Cardiac septum (tissue), 1 donor: ENCODE measurements at regions of chrX and their contacts with region 1.

Region 1: DNA sequence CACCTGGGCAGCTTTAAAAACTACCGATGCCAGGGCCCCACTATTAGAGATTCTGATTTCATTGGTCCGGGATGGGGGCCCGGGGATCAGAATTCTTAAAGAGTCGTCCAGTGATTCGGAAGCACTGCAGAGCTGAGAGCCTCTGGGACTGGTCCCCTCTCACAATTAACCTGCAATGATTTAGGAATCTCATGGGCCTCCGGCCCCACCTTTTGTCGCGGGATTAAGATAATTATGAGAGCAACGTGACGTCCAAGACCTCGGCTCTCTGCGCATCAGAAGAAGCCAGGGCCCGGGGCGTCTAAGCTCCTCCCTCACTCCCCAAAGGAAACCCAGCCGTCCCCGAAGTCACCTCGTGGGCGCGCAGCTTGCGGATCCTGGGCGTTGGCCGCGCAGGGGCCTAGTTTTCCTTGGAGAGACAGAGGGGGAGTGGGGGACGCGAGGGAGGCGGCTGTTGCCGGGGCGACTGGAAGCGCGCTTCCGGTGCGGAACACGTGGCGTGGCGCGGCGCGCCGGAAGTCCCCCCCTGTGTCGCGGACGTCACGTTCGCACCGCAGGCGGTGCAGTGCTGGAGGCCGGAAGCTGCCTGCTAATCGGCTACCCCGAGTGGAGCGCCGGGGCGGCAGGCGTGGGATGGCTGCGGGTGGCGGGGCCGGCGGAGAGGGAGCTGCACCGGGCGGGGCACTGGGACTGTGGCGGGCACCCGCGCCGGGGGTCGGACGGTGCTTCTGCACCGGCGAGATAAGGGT is at the start of gene GEMIN8:
- DNase-seq: peak; percentile 93
- total RNA-seq, gene GEMIN8: 17.8 TPM

Region 2: GRCh38 chrX:12946838-12947544 is 1082.6 kb before region 1 on chrX:
- intact Hi-C with region 1: loop called (anchors 5 kb)
- DNase-seq: peak; percentile 79

Region 3: DNA sequence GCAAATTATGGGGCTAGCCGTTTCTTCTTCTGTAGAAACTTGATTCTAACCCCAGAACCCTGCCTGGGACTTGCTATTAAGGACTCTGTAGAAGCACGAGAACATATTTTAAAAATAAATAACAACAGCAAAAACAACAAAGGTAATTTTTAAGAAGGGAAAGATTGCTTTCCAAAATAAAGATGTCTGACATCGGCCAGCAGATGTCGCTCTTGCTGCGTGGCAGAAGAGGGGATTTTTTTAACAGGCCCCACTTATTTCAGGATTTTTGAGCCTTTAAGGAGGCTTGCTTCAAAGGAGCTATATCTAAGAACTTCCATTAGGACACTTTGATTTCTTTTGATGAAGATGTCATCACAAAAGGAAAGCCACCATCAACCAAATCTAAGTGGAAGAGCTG is 523.0 kb before region 1 on chrX:
- intact Hi-C with region 1: loop called (anchors 1 kb)
- DNase-seq: no peak

Region 4: DNA sequence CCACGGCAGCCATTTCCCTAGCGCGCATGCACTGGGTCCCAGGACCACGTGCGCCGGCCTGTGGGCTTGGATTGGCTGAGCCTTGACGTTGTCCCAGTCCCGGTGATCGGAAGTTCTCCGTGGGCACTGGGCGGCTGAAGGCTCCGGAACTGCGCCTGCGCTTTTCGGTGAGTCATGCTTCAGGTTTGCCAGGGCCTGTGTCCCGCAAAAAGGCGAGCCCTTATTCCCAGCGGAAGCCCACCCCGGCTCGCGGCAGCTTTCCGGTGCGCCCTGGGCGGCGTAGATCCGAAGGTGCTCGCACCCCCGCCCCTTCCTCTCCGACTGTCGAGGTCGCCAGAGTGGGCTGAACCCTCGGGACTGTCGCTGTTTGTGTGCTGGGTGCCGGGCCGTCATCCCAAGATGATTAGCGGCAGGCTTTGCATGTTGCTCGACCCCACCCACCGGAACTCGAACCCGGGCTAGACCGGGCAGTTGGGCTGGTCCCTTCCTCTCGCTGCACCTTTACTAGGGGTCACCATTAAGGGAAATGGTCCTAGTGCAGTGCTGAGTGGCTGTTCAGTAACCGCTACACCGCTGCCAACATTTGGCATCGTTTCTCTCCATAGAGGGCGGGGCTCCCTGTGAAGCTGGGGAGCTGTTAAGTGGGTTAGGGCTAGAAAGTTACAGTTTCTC is 376.4 kb before region 1 on chrX and contains the start of gene TCEANC:
- intact Hi-C with region 1: loop called (anchors 2 kb)
- DNase-seq: peak; percentile 98
- total RNA-seq, gene TCEANC: 6.4 TPM

Region 5: GRCh38 chrX:13658602-13659001 is 371.0 kb before region 1 on chrX:
- intact Hi-C with region 1: loop called (anchors 1 kb)
- DNase-seq: no peak

Region 6: GRCh38 chrX:13750204-13750603 is 279.4 kb before region 1 on chrX:
- intact Hi-C with region 1: loop called (anchors 2 kb)
- DNase-seq: no peak

Region 7: GRCh38 chrX:14690553-14690952 is 661.0 kb after region 1 on chrX:
- intact Hi-C with region 1: no loop called
- DNase-seq: no peak